ENCODE measurements at regions of chr2 and their contacts with region 1.

Region 1: DNA sequence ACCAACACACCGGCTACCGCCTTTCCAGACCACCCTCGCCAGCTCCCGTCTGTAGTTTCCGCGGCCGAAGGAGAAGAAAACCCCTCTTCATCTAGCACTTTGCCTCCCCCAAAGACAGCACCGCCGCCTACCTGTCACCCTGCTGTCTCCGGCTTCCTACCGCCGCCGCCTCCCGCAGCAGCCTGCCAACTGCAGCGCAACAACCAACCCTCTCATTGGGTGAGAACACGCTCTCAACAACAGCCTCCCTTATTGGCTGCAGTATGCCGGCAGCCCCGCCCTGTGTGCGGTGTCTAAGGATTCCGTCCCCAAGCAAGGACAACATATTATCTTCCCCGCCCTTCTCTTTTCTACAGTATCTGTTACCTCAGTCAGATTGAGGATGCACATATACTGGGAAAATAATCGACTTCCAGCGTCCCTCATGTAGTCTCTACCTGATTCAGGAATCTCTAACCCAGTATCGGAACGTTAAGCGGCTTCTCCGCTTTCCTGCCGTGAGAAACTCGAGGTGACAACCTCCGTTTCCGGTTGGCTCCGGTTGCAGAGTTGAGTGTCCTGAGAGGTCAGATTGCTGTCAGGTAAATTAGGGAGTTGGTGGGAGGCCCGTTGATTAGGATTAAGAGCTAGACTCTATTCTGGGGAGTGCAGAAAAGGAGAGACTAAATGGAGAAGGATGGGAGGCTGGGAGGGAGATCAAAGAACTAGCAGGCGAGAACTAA is at the starts of genes HYCC2 and NDUFB3:
- DNase-seq: peak; percentile 95
- ATAC-seq: peak; percentile 97
- H3K4me3 ChIP-seq: peak within 1 kb of the TSS; percentile 80
- H3K27ac ChIP-seq: peak within 1 kb of the TSS; percentile 92
- H3K4me1 ChIP-seq: peaks cover 23% of the 10 kb centered on the region
- H3K27me3 ChIP-seq: no peaks in the 10 kb centered on the region
- CTCF ChIP-seq: peak in 2 of 3 experiments; percentile 28 to 43; a peak in 3 of 6 replicates
- EP300 ChIP-seq: 0 out of 4 replicates have a peak, but pooled peaks of 1 of the 2 experiments have one; percentile 13
- POLR2A ChIP-seq: peak; percentile 91
- RAD21 ChIP-seq: no peak
- polyA plus RNA-seq, gene HYCC2: 3.4 to 6.8 TPM
- polyA plus RNA-seq, gene NDUFB3: 1,005 to 1,059 TPM

Region 2: DNA sequence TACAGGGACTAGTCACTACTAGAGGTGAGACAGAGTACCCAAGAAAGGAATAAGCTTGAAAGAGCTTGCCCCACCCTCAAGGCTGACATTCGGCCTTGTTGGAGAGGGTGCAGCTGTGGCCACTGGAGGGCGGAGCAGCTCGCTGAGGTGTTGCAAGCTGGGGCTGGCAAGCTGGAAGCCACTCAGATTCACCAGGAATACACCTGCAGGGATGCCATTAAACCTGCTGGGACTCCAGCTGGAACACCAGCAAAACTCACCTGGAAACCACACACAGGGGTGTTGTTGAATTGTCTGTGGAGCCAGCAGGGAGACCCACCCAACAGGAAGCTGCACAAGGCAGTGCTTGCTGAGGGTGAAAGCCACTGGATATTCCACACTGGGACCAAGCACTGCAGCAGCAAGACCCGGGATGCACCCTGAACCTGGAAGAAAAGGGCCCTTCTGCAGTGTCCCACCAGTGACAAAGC is 587.9 kb before region 1 on chr2:
- CTCF ChIA-PET with region 1: interaction called, 10 read pairs
- POLR2A ChIA-PET with region 1: no interaction called
- RAD21 ChIA-PET with region 1: interaction called, 13 read pairs
- SMC1A ChIA-PET with region 1: no interaction called
- in situ Hi-C with region 1: no loop called
- intact Hi-C with region 1: no loop called
- DNase-seq: no peak
- ATAC-seq: peak; percentile 86
- H3K4me3 ChIP-seq: no peak overlapping the region
- H3K27ac ChIP-seq: no peak overlapping the region
- H3K4me1 ChIP-seq: no peaks in the 10 kb centered on the region
- H3K27me3 ChIP-seq: no peaks in the 10 kb centered on the region
- CTCF ChIP-seq: peak; percentile 69 to 80 (median 78)
- EP300 ChIP-seq: no peak
- POLR2A ChIP-seq: no peak
- RAD21 ChIP-seq: peak; percentile 65

Region 3: DNA sequence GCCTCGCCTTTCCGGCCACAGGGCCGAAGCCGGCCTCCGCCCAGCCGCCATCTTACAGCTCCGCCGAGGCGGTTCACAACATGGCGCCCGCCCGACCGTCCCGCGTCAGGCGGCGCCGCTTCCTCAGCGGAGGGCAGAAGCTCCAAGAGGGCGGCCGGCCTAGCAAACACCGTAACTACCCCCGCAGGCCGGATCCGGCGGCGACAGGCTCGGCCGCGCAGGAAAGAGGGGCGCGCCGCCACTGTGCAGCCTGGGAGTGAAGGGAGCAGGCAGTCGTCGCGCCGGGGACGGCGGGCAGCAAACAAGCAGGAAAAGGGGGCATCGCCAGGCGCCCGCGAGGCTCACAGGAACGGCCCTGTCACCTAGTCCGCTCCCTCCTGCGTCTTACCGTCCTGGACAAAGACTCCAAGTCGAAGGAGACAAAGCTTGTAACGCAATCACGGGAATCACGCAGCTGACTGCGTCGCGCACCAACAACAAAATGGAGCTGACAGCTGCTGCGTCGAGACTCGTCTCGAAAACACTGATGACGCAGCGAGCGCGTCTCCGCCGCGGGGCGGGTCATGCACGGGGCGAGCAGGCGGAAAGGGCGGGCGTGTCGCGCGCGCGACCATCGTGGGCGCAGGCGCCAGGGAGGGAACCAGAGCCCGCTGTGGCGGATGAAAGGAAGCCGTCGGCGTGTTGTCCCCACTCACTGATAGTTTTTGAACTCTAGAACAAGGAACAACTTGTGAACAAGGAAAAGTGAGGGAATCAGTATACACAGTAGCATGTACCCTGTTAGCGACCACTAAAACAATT is 207.3 kb before region 1 on chr2 and contains the start of gene CLK1:
- CTCF ChIA-PET with region 1: interaction called, 15 read pairs
- POLR2A ChIA-PET with region 1: interaction called, 3 read pairs
- RAD21 ChIA-PET with region 1: interaction called, 10 read pairs
- SMC1A ChIA-PET with region 1: interaction called, 3 read pairs
- in situ Hi-C with region 1: no loop called
- intact Hi-C with region 1: no loop called
- DNase-seq: peak; percentile 74
- ATAC-seq: peak; percentile 88
- H3K4me3 ChIP-seq: peak within 1 kb of the TSS; percentile 100
- H3K27ac ChIP-seq: peak within 1 kb of the TSS; percentile 100
- H3K4me1 ChIP-seq: no peaks in the 10 kb centered on the region
- H3K27me3 ChIP-seq: no peaks in the 10 kb centered on the region
- CTCF ChIP-seq: no peak
- EP300 ChIP-seq: 0 out of 4 replicates have a peak, but pooled peaks of 1 of the 2 experiments have one; percentile 52
- POLR2A ChIP-seq: peak; percentile 99
- RAD21 ChIP-seq: no peak
- polyA plus RNA-seq, gene CLK1: 95.6 to 138 TPM

Region 4: GRCh38 chr2:200929334-200930249 is 142.0 kb before region 1 on chr2:
- CTCF ChIA-PET with region 1: interaction called, 10 read pairs
- POLR2A ChIA-PET with region 1: no interaction called
- RAD21 ChIA-PET with region 1: interaction called, 5 read pairs
- SMC1A ChIA-PET with region 1: interaction called, 8 read pairs
- in situ Hi-C with region 1: no loop called
- intact Hi-C with region 1: no loop called
- DNase-seq: no peak
- ATAC-seq: no peak
- H3K4me3 ChIP-seq: no peak overlapping the region
- H3K27ac ChIP-seq: no peak overlapping the region
- H3K4me1 ChIP-seq: no peaks in the 10 kb centered on the region
- H3K27me3 ChIP-seq: no peaks in the 10 kb centered on the region
- CTCF ChIP-seq: no peak
- EP300 ChIP-seq: no peak
- POLR2A ChIP-seq: no peak
- RAD21 ChIP-seq: no peak

Region 5: GRCh38 chr2:201057087-201057521 is 14.5 kb before region 1 on chr2:
- CTCF ChIA-PET with region 1: interaction called, 20 read pairs
- POLR2A ChIA-PET with region 1: interaction called, 3 read pairs
- RAD21 ChIA-PET with region 1: interaction called, 6 read pairs
- SMC1A ChIA-PET with region 1: interaction called, 4 read pairs
- in situ Hi-C with region 1: no loop called
- intact Hi-C with region 1: no loop called
- DNase-seq: no peak
- ATAC-seq: no peak
- H3K4me3 ChIP-seq: no peak overlapping the region
- H3K27ac ChIP-seq: no peak overlapping the region
- H3K4me1 ChIP-seq: no peaks in the 10 kb centered on the region
- H3K27me3 ChIP-seq: no peaks in the 10 kb centered on the region
- CTCF ChIP-seq: no peak
- EP300 ChIP-seq: no peak
- POLR2A ChIP-seq: no peak
- RAD21 ChIP-seq: no peak

Region 6: GRCh38 chr2:201149064-201149820 is 77.6 kb after region 1 on chr2:
- CTCF ChIA-PET with region 1: interaction called, 12 read pairs
- POLR2A ChIA-PET with region 1: interaction called, 4 read pairs
- RAD21 ChIA-PET with region 1: interaction called, 4 read pairs
- SMC1A ChIA-PET with region 1: interaction called, 11 read pairs
- in situ Hi-C with region 1: no loop called
- intact Hi-C with region 1: no loop called
- DNase-seq: no peak
- ATAC-seq: peak; percentile 5; the same call in 1 of the 3 replicates
- H3K4me3 ChIP-seq: no peak overlapping the region
- H3K27ac ChIP-seq: no peak overlapping the region
- H3K4me1 ChIP-seq: peaks cover 8% of the 10 kb centered on the region; the same call in 1 of the 2 replicates
- H3K27me3 ChIP-seq: no peaks in the 10 kb centered on the region
- CTCF ChIP-seq: no peak
- EP300 ChIP-seq: no peak
- POLR2A ChIP-seq: no peak
- RAD21 ChIP-seq: no peak

Region 7: DNA sequence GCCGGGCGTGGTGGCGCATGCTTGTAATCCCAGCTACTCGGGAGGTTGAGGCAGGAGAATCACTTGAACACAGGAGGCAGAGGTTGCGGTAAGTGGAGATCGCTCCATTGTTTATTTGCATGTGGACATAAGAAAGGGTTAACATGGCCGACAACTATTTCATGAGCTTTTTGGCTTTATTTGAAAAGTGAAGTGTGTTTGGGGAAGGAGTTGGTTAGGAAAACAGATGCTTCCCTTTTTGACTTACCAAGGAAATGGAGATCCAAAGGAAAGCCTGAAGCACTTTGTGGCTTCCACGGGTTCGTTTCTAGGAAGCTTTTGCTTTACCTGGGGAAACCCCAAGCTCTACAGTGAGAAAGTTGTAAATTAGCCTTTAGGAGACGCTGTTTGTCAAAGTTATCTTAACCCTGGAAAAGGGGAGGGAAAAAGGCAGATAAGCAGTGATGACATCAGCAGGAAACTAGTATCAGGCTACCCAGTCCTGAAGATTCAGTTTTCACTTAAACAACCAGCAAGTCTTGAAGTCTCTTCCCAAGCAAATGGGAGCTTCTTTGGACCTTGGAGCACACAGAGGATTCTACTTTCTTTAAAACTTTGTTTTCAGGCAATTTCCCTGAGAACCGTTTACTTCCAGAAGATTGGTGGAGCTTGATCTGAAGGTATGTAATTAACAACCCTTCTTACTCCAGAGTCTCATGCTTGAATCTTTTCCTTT is 111.2 kb after region 1 on chr2 and contains the start of gene CASP10:
- CTCF ChIA-PET with region 1: interaction called, 37 read pairs
- POLR2A ChIA-PET with region 1: interaction called, 3 read pairs
- RAD21 ChIA-PET with region 1: interaction called, 31 read pairs
- SMC1A ChIA-PET with region 1: interaction called, 20 read pairs
- in situ Hi-C with region 1: loop called (anchors 5 kb)
- intact Hi-C with region 1: no loop called
- DNase-seq: peak; percentile 77
- ATAC-seq: peak; percentile 80
- H3K4me3 ChIP-seq: peak within 1 kb of the TSS; percentile 70
- H3K27ac ChIP-seq: peak within 1 kb of the TSS; percentile 1; the same call in 1 of the 2 replicates
- H3K4me1 ChIP-seq: no peaks in the 10 kb centered on the region
- H3K27me3 ChIP-seq: no peaks in the 10 kb centered on the region; a peak in 2 of 4 replicates
- CTCF ChIP-seq: peak; percentile 65 to 92 (median 76); a peak in 4 of 6 replicates
- EP300 ChIP-seq: no peak
- POLR2A ChIP-seq: no peak
- RAD21 ChIP-seq: peak; percentile 87
- polyA plus RNA-seq, gene CASP10: 7.5 to 9.5 TPM